Activated CD8-positive, alpha-beta memory T cell treated with anti-CD3 and anti-CD28 coated beads, Interleukin-2, amount 10 ng/mL, durations not matched to agents 7 days and 5 days (primary cell): ENCODE measurements at regions of chr1 and their contacts with region 1.

Region 1: DNA sequence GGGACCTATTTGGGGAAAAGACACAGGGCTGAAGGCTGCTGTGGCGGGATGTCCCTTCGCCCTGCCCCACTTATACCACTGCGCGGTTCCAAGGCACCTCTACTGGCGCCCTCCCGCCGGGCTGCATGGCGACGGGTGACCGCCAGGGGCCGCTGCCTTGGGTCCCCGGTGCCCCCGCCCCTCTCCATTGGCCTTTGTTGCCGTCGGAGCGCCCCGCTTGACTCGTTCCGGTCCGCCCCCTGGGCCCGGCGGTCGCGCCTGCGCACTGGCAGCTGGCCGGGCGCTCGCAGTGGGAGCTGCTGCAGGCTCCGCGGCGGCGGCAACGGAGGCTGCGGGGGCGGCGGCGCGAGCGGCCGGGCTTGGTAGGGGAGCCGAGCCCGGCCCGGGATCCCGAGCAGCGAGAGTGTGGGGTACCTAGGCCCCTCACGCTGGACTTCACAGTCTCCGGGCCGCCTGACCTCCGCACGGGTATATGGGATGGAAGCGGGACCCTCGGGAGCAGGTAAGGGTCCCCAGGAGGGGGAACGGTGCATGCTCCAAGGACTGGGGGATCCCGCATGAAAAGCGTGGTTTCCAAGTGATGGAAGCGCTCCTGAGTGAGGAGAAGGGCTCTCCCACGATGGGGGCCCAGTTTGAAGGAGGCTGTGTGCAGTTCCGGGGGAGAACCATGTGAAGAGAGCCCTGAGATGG is at the start of gene AGO1:
- DNase-seq: peak; percentile 97
- ATAC-seq: peak; percentile 97
- H3K4me3 Mint-ChIP-seq: peak within 1 kb of the TSS; percentile 87
- H3K27ac Mint-ChIP-seq: peak within 1 kb of the TSS; percentile 80
- H3K4me1 Mint-ChIP-seq: peaks cover 50% of the 10 kb centered on the region
- H3K27me3 Mint-ChIP-seq: no peaks in the 10 kb centered on the region
- total RNA-seq, gene AGO1: 23.7 to 29.3 TPM

Region 2: GRCh38 chr1:35807614-35808449 is 75.3 kb before region 1 on chr1 and contains the start of gene AGO4:
- CTCF ChIA-PET with region 1: no interaction called
- DNase-seq: peak; percentile 52
- ATAC-seq: peak; percentile 55
- H3K4me3 Mint-ChIP-seq: peak within 1 kb of the TSS; percentile 79
- H3K27ac Mint-ChIP-seq: peak within 1 kb of the TSS; percentile 86
- H3K4me1 Mint-ChIP-seq: peaks cover 48% of the 10 kb centered on the region
- H3K27me3 Mint-ChIP-seq: no peaks in the 10 kb centered on the region
- total RNA-seq, gene AGO4: 12.1 to 16.1 TPM

Region 3: DNA sequence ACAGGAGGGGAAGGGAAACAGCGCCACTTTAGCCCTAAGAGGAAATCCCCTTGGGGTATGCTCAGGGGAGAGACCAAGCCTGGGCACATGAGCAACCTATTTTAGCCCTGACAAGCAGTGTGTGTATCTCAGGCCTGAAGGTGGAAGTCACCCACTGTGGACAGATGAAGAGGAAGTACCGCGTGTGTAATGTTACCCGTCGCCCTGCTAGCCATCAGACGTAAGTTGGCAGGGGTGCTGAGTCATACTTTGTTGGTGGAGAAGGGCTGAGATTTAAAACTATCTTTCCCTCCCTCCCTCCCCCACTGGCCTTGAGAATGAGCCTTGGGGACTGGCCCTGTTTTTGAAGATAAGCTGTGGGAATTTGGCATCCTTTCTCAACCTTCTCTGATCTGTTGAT is 11.1 kb after region 1 on chr1:
- CTCF ChIA-PET with region 1: interaction called, 15 read pairs
- DNase-seq: no peak
- ATAC-seq: no peak
- H3K4me3 Mint-ChIP-seq: no peak overlapping the region
- H3K27ac Mint-ChIP-seq: no peak overlapping the region
- H3K4me1 Mint-ChIP-seq: peaks cover 4% of the 10 kb centered on the region
- H3K27me3 Mint-ChIP-seq: no peaks in the 10 kb centered on the region

Region 4: GRCh38 chr1:35930593-35931445 is 47.7 kb after region 1 on chr1 and contains the start of gene AGO3:
- CTCF ChIA-PET with region 1: interaction called, 13 read pairs
- DNase-seq: peak; percentile 91
- ATAC-seq: peak; percentile 87
- H3K4me3 Mint-ChIP-seq: peak within 1 kb of the TSS; percentile 95
- H3K27ac Mint-ChIP-seq: peak within 1 kb of the TSS; percentile 95
- H3K4me1 Mint-ChIP-seq: peaks cover 31% of the 10 kb centered on the region
- H3K27me3 Mint-ChIP-seq: no peaks in the 10 kb centered on the region
- total RNA-seq, gene AGO3: 26.2 to 33.1 TPM

Region 5: GRCh38 chr1:36070349-36070748 is 187.3 kb after region 1 on chr1:
- CTCF ChIA-PET with region 1: no interaction called
- DNase-seq: no peak
- ATAC-seq: no peak
- H3K4me3 Mint-ChIP-seq: no peak overlapping the region
- H3K27ac Mint-ChIP-seq: no peak overlapping the region
- H3K4me1 Mint-ChIP-seq: no peaks in the 10 kb centered on the region
- H3K27me3 Mint-ChIP-seq: no peaks in the 10 kb centered on the region

Region 6: GRCh38 chr1:36087233-36088123 is 204.4 kb after region 1 on chr1:
- CTCF ChIA-PET with region 1: interaction called, 10 read pairs
- DNase-seq: no peak
- ATAC-seq: no peak
- H3K4me3 Mint-ChIP-seq: no peak overlapping the region
- H3K27ac Mint-ChIP-seq: peak overlapping the region; percentile 38
- H3K4me1 Mint-ChIP-seq: peaks cover 18% of the 10 kb centered on the region
- H3K27me3 Mint-ChIP-seq: peaks cover 18% of the 10 kb centered on the region